CD4-positive, alpha-beta memory T cell (primary cell): ENCODE measurements at regions of chr21 and their contacts with region 1.

Region 1: DNA sequence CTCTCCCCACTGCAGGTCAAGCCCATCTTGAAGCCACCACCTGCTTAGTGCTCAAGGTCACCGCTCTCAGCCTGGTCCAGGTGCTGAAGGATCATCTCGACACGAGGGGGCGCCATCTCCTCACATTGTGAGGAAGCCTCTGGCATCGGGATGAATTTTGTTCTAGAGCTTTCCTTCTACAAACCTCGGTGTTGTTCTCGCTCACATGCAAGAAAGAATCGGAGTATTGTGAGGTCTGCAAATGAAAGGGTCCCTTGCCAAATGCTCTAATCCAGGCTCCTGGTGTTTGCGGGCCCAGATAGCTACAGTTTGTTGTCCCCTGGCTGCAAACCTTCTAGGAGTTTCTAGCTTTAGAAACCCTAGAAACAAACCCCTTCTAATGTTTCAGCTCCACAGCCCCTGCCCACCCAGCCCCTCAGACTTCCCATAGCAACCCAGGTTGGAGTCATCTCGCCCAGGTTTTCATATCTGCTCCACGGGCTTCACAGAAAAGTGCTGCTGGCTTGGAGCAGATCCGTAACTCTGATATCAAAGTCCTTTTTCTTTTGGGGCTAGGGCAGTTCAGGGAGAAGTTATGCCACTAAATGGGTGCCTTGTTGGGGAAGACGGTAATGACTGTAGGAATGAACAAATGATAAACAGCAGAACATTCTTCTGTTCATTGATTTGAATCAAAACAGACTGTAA is 8.6 kb upstream of the ATP5PO start:
- DNase-seq: peak; percentile 80 to 86 (median 82)
- H3K4me3 ChIP-seq: no peak overlapping the region
- H3K4me3 Mint-ChIP-seq: peak overlapping the region in 3 of 8 donors; percentile 13 to 26 (median 23)
- H3K27ac ChIP-seq: no peak overlapping the region
- H3K27ac Mint-ChIP-seq: peak overlapping the region; percentile 12 to 91 (median 67)
- H3K4me1 ChIP-seq: peaks cover 8% of the 10 kb centered on the region
- H3K4me1 Mint-ChIP-seq: peaks cover 6 to 12% (median 9%) of the 10 kb centered on the region in 4 donors
- H3K27me3 ChIP-seq: no peaks in the 10 kb centered on the region
- H3K27me3 Mint-ChIP-seq: no peaks in the 10 kb centered on the region

Region 2: DNA sequence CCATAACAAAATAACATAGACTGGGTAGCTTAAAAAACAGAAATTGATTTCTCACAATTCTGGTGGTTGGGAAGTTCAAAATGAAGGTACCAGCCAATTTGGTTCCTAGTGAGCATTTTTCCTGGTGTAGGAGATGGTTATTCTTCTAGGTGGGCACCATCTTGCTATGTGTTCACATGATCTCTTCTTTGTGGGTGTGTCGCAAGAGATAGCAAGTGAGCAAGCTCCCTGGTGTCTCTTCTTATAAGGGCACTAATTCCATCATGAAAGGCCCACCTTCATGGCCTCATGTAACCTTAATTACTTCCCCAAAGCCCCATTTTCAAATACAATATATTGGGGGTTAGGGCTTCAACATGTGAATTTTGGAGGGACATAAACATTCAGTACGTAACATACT is 30.2 kb after region 1 on chr21:
- CTCF ChIA-PET with region 1: interaction called, 67 read pairs
- POLR2A ChIA-PET with region 1: interaction called, 141 read pairs
- intact Hi-C with region 1: loop called (anchors 2 kb)
- DNase-seq: no peak
- H3K4me3 ChIP-seq: no peak overlapping the region
- H3K4me3 Mint-ChIP-seq: no peak overlapping the region
- H3K27ac ChIP-seq: no peak overlapping the region
- H3K27ac Mint-ChIP-seq: peak overlapping the region in 2 of 7 donors; percentile 51 to 64
- H3K4me1 ChIP-seq: peaks cover 52% of the 10 kb centered on the region
- H3K4me1 Mint-ChIP-seq: peaks cover 27 to 65% (median 29%) of the 10 kb centered on the region in 4 donors
- H3K27me3 ChIP-seq: no peaks in the 10 kb centered on the region
- H3K27me3 Mint-ChIP-seq: no peaks in the 10 kb centered on the region

Region 3: GRCh38 chr21:34073032-34073869 is 149.0 kb after region 1 on chr21 and contains the starts of genes MRPS6 and SLC5A3:
- CTCF ChIA-PET with region 1: interaction called, 54 read pairs
- POLR2A ChIA-PET with region 1: interaction called, 26 read pairs
- intact Hi-C with region 1: loop called (anchors 2 kb)
- DNase-seq: peak; percentile 68 to 78 (median 69)
- H3K4me3 ChIP-seq: peak within 1 kb of the TSS; percentile 37 to 66
- H3K4me3 Mint-ChIP-seq: peak within 1 kb of the TSS; percentile 89 to 97 (median 94)
- H3K27ac ChIP-seq: peak within 1 kb of the TSS; percentile 68
- H3K27ac Mint-ChIP-seq: peak within 1 kb of the TSS; percentile 91 to 97 (median 93)
- H3K4me1 ChIP-seq: peaks cover 39% of the 10 kb centered on the region
- H3K4me1 Mint-ChIP-seq: peaks cover 36 to 54% (median 45%) of the 10 kb centered on the region in 4 donors
- H3K27me3 ChIP-seq: no peaks in the 10 kb centered on the region
- H3K27me3 Mint-ChIP-seq: no peaks in the 10 kb centered on the region
- total RNA-seq, gene MRPS6: 76.9 to 80.1 TPM
- total RNA-seq, gene SLC5A3: 32.8 to 33.4 TPM

Region 4: GRCh38 chr21:34129039-34129891 is 205.0 kb after region 1 on chr21:
- CTCF ChIA-PET with region 1: interaction called, 16 read pairs
- POLR2A ChIA-PET with region 1: interaction called, 7 read pairs
- intact Hi-C with region 1: loop called (anchors 2 kb)
- DNase-seq: peak; percentile 58 to 75 (median 65)
- H3K4me3 ChIP-seq: no peak overlapping the region
- H3K4me3 Mint-ChIP-seq: peak overlapping the region in 7 of 8 donors; percentile 40 to 80 (median 67)
- H3K27ac ChIP-seq: no peak overlapping the region
- H3K27ac Mint-ChIP-seq: peak overlapping the region; percentile 71 to 93 (median 86)
- H3K4me1 ChIP-seq: peaks cover 52% of the 10 kb centered on the region
- H3K4me1 Mint-ChIP-seq: peaks cover 66 to 95% (median 80%) of the 10 kb centered on the region in 4 donors
- H3K27me3 ChIP-seq: no peaks in the 10 kb centered on the region
- H3K27me3 Mint-ChIP-seq: no peaks in the 10 kb centered on the region

Region 5: GRCh38 chr21:34243562-34243961 is 319.3 kb after region 1 on chr21:
- CTCF ChIA-PET with region 1: interaction called, 39 read pairs
- POLR2A ChIA-PET with region 1: interaction called, 4 read pairs
- intact Hi-C with region 1: loop called (anchors 2 kb)
- DNase-seq: peak in 2 of 5 donors; percentile 2 to 6
- H3K4me3 ChIP-seq: no peak overlapping the region
- H3K4me3 Mint-ChIP-seq: no peak overlapping the region
- H3K27ac ChIP-seq: no peak overlapping the region
- H3K27ac Mint-ChIP-seq: no peak overlapping the region
- H3K4me1 ChIP-seq: no peaks in the 10 kb centered on the region
- H3K4me1 Mint-ChIP-seq: no peaks in the 10 kb centered on the region
- H3K27me3 ChIP-seq: no peaks in the 10 kb centered on the region
- H3K27me3 Mint-ChIP-seq: peaks cover 1 to 2% of the 10 kb centered on the region in 2 donors

Region 6: DNA sequence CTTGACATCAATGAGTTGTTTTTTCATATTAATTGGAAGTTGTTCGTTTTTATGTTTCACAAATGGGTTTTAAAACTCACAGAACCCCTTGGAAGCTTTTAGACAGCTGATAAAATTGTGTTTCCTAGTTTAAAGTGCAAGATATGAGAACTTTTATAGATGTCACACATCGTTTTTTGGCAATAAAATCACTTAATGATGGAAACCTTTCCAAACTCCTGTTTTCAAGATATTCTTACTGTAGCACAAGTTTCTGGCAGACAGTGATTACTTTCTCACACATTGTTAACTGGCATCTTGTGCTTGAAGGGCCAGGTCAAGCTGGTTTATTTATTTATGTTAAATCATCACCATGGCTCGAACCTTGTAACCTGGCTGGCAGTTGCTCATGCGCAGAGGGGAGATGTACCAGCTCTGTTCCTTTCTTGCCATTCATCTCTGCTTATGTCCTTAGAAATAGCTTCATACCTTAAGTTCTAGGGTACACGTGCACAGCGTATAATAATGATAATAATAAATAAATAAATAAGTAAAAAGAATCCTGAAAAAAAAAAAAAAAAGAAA is 700.9 kb after region 1 on chr21:
- CTCF ChIA-PET with region 1: interaction called, 3 read pairs
- POLR2A ChIA-PET with region 1: no interaction called
- intact Hi-C with region 1: loop called (anchors 5 kb)
- DNase-seq: no peak
- H3K4me3 ChIP-seq: no peak overlapping the region
- H3K4me3 Mint-ChIP-seq: no peak overlapping the region
- H3K27ac ChIP-seq: no peak overlapping the region
- H3K27ac Mint-ChIP-seq: no peak overlapping the region
- H3K4me1 ChIP-seq: no peaks in the 10 kb centered on the region
- H3K4me1 Mint-ChIP-seq: no peaks in the 10 kb centered on the region
- H3K27me3 ChIP-seq: no peaks in the 10 kb centered on the region
- H3K27me3 Mint-ChIP-seq: peaks cover 17 to 25% of the 10 kb centered on the region in 2 donors